Sciatic nerve (tissue), 2 donors: ENCODE measurements at regions of chr3 and their contacts with region 1.

Region 1: GRCh38 chr3:52070724-52071621 is 14.6 kb upstream of the DUSP7 start:
- DNase-seq: no peak
- ATAC-seq: no peak

Region 2: GRCh38 chr3:51874889-51875288 is 196.1 kb before region 1 on chr3:
- intact Hi-C with region 1: no loop called
- DNase-seq: no peak
- ATAC-seq: no peak

Region 3: GRCh38 chr3:52108302-52109232 is 37.6 kb after region 1 on chr3:
- intact Hi-C with region 1: no loop called
- DNase-seq: no peak
- ATAC-seq: peak; percentile 87

Region 4: GRCh38 chr3:52123106-52123725 is 52.2 kb after region 1 on chr3:
- intact Hi-C with region 1: loop called (anchors 10 kb)
- DNase-seq: peak; percentile 85
- ATAC-seq: peak; percentile 77